ENCODE measurements at regions of chr22 and their contacts with region 1.

Region 1: DNA sequence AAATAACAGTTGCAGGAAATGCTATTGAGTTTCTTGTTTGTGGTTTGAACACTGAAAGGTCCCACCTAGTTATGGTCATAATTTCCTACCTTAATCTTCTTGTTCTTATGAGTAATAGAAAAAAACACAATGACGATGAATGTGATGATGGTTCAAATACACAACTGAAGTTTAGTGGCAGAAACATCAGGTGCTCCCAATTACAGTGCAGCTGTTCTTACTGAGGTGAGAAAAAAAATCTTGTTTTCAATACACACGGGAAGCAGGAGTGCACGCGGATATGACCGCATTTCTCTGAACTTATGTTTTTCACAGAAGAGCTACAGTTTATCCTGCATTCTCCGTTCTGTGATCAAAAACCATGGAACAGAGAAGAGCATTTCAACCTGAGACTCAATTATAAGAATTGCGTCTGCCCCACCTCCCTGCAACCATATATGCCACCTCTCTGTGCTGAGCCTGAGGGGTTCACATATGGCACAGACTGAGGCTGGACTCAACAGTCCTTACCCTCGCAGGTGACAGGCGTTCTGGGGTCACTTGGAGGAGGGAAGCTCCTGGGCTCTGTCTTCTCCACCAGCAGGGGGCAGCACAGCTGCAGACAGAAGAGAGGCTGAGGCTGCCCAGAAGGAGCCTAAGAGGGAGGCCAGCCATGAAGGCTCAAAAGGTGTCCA is 99.7 kb upstream of the IGLL5 start:
- DNase-seq: peak; percentile 44
- ATAC-seq: peak; percentile 97
- H3K4me3 ChIP-seq: no peak overlapping the region
- H3K27ac ChIP-seq: no peak overlapping the region
- H3K4me1 ChIP-seq: no peaks in the 10 kb centered on the region
- H3K27me3 ChIP-seq: peaks cover 5% of the 10 kb centered on the region; the same call in 1 of the 2 replicates
- CTCF ChIP-seq: peak; percentile 50 to 97 (median 95); a peak in 5 of 6 replicates
- POLR2A ChIP-seq: no peak
- RAD21 ChIP-seq: peak; percentile 54; the same call in 1 of the 2 replicates

Region 2: DNA sequence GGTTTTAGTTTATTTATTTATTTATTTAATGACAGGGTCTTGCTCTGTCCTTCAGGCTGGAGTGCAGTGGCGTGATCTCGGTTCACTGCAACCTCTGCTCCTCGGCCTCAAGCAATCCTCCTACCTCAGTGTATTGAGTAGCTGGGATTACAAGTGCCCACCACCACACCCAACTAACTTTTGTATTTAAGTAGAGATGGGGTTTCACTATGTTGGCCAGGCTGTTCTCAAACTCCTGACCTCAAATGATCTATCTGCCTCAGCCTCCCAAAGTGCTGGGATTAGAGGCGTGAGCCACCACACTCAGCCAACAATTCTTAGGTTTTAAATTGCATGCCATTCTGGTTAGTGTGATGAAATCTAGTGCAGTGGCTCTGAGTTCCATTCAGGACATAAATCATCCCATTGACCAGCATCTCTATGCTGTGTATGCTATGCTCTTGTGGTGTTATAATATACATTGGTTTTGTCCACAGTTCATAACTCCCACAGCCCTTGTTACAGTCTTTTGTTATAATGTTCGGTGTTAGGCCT is 307.9 kb before region 1 on chr22:
- CTCF ChIA-PET with region 1: no interaction called
- POLR2A ChIA-PET with region 1: no interaction called
- RAD21 ChIA-PET with region 1: no interaction called
- intact Hi-C with region 1: no loop called
- DNase-seq: no peak
- ATAC-seq: no peak
- H3K4me3 ChIP-seq: no peak overlapping the region
- H3K27ac ChIP-seq: no peak overlapping the region
- H3K4me1 ChIP-seq: no peaks in the 10 kb centered on the region
- H3K27me3 ChIP-seq: no peaks in the 10 kb centered on the region
- CTCF ChIP-seq: no peak
- POLR2A ChIP-seq: no peak
- RAD21 ChIP-seq: no peak

Region 3: DNA sequence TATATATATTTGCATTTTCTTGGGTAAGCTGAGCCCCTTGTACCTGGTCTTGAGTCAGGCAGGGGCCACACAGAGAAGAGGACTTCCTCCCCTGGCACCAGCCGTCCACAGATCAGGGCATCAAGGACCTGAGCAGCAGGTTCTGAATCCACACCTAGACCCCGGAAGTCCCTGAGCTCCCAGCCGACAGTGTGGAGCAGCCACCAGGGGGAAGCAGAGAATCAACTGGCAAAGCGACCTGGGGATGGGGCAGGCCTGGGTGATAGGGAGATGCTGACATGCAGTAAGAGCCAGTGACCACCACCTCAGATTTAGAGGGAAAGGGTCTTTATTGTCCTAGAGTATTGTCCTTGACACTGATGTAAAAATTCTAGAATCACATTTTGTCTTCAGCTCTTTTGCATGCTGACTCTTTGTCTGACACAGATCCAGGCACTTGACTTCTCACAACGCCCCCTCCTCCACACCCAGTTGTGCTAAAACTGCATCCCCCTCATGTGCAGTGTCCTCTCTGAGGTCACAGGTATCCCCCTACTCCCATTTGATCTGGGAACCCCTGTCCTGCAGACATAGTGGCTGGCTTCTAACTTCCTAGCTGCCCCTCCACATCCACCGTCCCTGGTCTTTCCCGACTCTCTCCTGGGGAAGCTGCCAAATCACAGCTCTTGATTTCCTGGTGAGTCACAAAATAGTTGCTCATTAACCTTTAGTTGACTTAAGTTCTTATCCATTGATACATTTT is 34.2 kb before region 1 on chr22:
- CTCF ChIA-PET with region 1: interaction called, 10 read pairs
- POLR2A ChIA-PET with region 1: no interaction called
- RAD21 ChIA-PET with region 1: no interaction called
- intact Hi-C with region 1: no loop called
- DNase-seq: peak; percentile 47
- ATAC-seq: peak; percentile 99
- H3K4me3 ChIP-seq: no peak overlapping the region
- H3K27ac ChIP-seq: no peak overlapping the region
- H3K4me1 ChIP-seq: peaks cover 0 to 4% of the 10 kb centered on the region in 2 experiments; a peak in 1 of 4 replicates
- H3K27me3 ChIP-seq: no peaks in the 10 kb centered on the region
- CTCF ChIP-seq: peak; percentile 59 to 93 (median 81)
- POLR2A ChIP-seq: no peak
- RAD21 ChIP-seq: peak; percentile 53

Region 4: DNA sequence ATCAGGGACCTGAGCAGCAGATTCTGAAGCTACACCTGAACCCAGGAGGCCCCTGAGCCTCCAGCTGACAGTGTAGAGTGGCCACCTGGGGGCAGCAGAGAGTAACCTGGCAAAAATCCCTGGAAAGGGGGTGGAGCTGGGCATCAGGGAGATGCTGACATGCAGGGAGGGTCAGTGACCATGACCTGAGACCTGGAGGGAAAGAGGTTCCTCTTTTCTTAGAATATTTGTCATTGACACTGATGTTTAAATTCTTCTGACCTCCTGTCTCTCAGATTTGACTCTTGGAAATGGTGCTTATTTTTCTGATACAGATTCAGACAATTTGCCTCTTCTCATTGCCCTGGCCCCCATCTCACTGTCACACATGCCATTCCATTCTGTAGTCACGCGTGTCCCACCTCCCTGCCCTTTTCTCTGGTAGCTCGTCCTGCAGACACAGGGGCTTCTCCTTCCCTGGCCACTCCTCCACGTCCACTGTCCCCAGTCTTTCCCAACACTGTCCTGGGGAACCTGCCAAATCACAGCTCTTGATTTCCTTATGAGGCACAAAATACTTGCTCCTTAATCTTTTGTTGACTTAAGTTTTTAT is 17.5 kb before region 1 on chr22:
- CTCF ChIA-PET with region 1: interaction called, 46 read pairs
- POLR2A ChIA-PET with region 1: no interaction called
- RAD21 ChIA-PET with region 1: no interaction called
- intact Hi-C with region 1: no loop called
- DNase-seq: no peak
- ATAC-seq: peak; percentile 96
- H3K4me3 ChIP-seq: no peak overlapping the region
- H3K27ac ChIP-seq: no peak overlapping the region
- H3K4me1 ChIP-seq: no peaks in the 10 kb centered on the region
- H3K27me3 ChIP-seq: peaks cover 8% of the 10 kb centered on the region; the same call in 1 of the 2 replicates
- CTCF ChIP-seq: peak; percentile 59 to 94 (median 90); a peak in 5 of 6 replicates
- POLR2A ChIP-seq: no peak
- RAD21 ChIP-seq: peak; percentile 38; the same call in 1 of the 2 replicates

Region 5: GRCh38 chr22:22799561-22799960 is 11.6 kb after region 1 on chr22:
- CTCF ChIA-PET with region 1: interaction called, 17 read pairs
- POLR2A ChIA-PET with region 1: no interaction called
- RAD21 ChIA-PET with region 1: no interaction called
- intact Hi-C with region 1: no loop called
- DNase-seq: no peak
- ATAC-seq: no peak
- H3K4me3 ChIP-seq: no peak overlapping the region
- H3K27ac ChIP-seq: no peak overlapping the region
- H3K4me1 ChIP-seq: no peaks in the 10 kb centered on the region
- H3K27me3 ChIP-seq: no peaks in the 10 kb centered on the region
- CTCF ChIP-seq: no peak
- POLR2A ChIP-seq: no peak
- RAD21 ChIP-seq: no peak

Region 6: DNA sequence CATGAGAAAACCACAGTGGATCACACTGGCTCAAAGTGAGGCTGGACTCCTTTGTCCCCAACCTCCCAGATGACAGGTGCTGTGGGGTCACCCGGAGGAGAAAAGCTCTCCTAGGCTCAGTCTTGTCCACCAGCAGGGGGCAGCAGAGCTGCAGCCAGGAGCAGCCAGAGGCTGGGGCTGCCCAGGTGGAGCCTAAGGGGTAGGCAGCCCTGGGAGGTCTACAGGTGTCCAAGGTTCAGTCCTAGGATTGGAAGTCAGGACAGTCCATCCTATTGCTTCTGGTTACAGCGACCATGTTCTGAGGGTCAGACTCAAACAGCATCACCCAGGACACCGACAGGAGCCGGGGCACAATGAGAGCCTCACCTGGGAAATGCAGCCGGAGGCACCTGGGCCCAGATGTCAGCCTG is 22.1 kb after region 1 on chr22:
- CTCF ChIA-PET with region 1: interaction called, 28 read pairs
- POLR2A ChIA-PET with region 1: no interaction called
- RAD21 ChIA-PET with region 1: interaction called in 1 of 2 experiments, 4 read pairs
- intact Hi-C with region 1: no loop called
- DNase-seq: peak; percentile 36
- ATAC-seq: peak; percentile 100
- H3K4me3 ChIP-seq: no peak overlapping the region
- H3K27ac ChIP-seq: no peak overlapping the region
- H3K4me1 ChIP-seq: no peaks in the 10 kb centered on the region
- H3K27me3 ChIP-seq: no peaks in the 10 kb centered on the region
- CTCF ChIP-seq: peak; percentile 54 to 98 (median 97); a peak in 5 of 6 replicates
- POLR2A ChIP-seq: no peak
- RAD21 ChIP-seq: peak; percentile 66

Measured in HCT116 (cell line).